Activated CD4-positive, alpha-beta memory T cell treated with anti-CD3 and anti-CD28 coated beads, Interleukin-2, amount 10 ng/mL, durations not matched to agents 7 days and 5 days (primary cell): ENCODE measurements at regions of chr12 and their contacts with region 1.

Region 1: DNA sequence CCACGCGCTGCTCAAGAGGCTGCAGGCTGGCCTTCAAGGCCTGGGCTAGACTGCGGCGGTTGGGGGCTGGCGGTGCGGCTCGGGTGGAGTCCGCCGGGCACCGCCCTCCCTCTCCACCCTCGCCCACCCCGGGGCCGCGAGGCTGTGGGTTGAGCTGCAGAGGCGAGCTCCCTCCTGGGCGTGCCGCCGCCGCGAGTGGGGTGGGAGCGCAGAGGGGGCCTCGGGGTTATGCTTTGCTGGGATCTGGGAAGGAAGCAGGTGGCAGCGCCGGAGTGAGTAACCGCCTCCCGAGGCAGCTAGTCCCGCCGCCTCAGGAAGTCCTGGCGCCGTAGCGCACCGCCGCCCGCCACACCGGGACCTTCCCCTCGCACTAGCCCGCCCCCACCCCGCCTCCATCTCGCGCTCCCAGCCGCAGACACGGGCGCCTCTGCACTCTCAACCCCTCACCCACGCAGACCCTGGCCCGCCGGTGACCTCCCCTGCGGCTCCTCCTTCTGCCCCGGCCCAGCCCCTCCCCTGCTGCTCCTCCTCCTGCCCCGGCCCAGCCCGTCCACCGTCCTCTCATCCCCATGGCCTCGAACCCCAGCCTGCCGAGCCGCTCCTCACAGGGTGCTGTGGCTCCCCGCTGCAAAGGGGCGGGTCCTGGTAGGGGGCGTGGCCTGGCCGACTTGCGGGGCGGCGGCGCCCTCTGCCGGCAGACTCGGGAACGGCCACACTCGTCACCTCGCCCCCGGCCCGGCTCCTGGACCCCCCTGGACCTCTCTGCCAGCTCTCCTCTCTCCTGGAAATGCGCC is 16.6 kb downstream of the TAMALIN start:
- DNase-seq: peak; percentile 93
- H3K4me3 Mint-ChIP-seq: peak overlapping the region; percentile 86
- H3K27ac Mint-ChIP-seq: peak overlapping the region; percentile 98
- H3K4me1 Mint-ChIP-seq: peaks cover 46% of the 10 kb centered on the region
- H3K27me3 Mint-ChIP-seq: peaks cover 6% of the 10 kb centered on the region

Region 2: DNA sequence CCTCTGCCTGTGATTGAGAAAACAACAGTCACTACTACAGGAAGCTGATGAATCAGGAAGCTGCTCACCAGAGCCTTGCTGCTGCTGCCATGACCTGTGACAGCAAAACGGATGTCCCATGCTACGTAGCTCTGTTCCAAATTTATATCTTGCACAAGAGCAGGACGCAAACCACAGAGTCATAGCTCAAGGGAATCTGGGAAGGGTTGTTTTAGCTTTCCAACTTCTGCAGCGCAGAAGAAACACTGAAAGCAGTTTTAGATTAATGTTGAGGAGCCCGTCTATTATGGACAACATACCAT is 137.4 kb before region 1 on chr12:
- CTCF ChIA-PET with region 1: interaction called, 17 read pairs
- POLR2A ChIA-PET with region 1: interaction called, 3 read pairs
- DNase-seq: peak; percentile 70
- H3K4me3 Mint-ChIP-seq: no peak overlapping the region
- H3K27ac Mint-ChIP-seq: peak overlapping the region; percentile 78
- H3K4me1 Mint-ChIP-seq: peaks cover 24% of the 10 kb centered on the region
- H3K27me3 Mint-ChIP-seq: peaks cover 2% of the 10 kb centered on the region

Region 3: GRCh38 chr12:51980051-51980808 is 43.1 kb before region 1 on chr12:
- CTCF ChIA-PET with region 1: interaction called, 299 read pairs
- POLR2A ChIA-PET with region 1: no interaction called
- DNase-seq: peak; percentile 75
- H3K4me3 Mint-ChIP-seq: no peak overlapping the region
- H3K27ac Mint-ChIP-seq: peak overlapping the region; percentile 51
- H3K4me1 Mint-ChIP-seq: peaks cover 29% of the 10 kb centered on the region
- H3K27me3 Mint-ChIP-seq: peaks cover 3% of the 10 kb centered on the region

Region 4: GRCh38 chr12:52010152-52010622 is 13.2 kb before region 1 on chr12:
- CTCF ChIA-PET with region 1: interaction called, 58 read pairs
- POLR2A ChIA-PET with region 1: interaction called, 117 read pairs
- DNase-seq: no peak
- H3K4me3 Mint-ChIP-seq: no peak overlapping the region
- H3K27ac Mint-ChIP-seq: no peak overlapping the region
- H3K4me1 Mint-ChIP-seq: peaks cover 24% of the 10 kb centered on the region
- H3K27me3 Mint-ChIP-seq: peaks cover 28% of the 10 kb centered on the region

Region 5: GRCh38 chr12:52055781-52056711 is 32.7 kb after region 1 on chr12:
- CTCF ChIA-PET with region 1: interaction called, 290 read pairs
- POLR2A ChIA-PET with region 1: interaction called, 14 read pairs
- DNase-seq: no peak
- H3K4me3 Mint-ChIP-seq: no peak overlapping the region
- H3K27ac Mint-ChIP-seq: no peak overlapping the region
- H3K4me1 Mint-ChIP-seq: peaks cover 21% of the 10 kb centered on the region
- H3K27me3 Mint-ChIP-seq: no peaks in the 10 kb centered on the region

Region 6: DNA sequence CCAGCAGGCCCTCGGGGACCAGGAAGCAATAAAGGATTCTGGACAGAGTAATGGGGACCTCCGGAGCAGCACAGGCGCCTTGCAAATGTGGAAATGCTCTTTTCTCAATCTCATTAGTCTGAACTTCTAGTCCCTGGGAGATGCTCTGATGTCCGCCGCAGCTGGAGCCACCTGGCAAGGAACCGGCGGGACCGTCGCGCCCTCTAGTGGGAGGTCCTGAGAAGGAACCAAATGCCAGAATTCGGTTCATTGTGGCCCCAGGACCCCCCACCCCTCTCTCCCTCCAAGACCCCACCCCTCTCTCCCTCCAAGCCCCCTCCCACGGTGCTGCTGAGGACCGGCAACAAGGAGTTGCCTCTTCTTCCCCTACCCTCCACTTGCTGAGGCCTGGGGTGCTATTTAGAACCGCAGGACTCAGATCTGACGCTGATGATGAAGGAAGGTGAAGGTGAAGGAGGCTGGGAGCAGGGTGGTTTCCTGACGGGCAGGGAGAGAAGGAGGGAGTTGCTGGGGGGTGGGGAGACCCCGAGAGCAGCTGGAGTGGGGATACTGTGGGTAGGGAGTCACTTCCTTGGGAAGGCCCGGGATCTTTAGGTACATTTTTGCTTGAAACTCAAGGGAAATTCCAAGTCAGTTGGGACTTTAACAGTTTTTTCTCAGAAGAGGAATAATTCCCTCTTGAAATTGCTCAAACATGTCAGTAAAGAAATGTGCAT is 98.6 kb after region 1 on chr12:
- CTCF ChIA-PET with region 1: interaction called, 154 read pairs
- POLR2A ChIA-PET with region 1: interaction called, 4 read pairs
- DNase-seq: peak; percentile 71
- H3K4me3 Mint-ChIP-seq: no peak overlapping the region
- H3K27ac Mint-ChIP-seq: no peak overlapping the region
- H3K4me1 Mint-ChIP-seq: peaks cover 20% of the 10 kb centered on the region
- H3K27me3 Mint-ChIP-seq: peaks cover 15% of the 10 kb centered on the region